ENCODE measurements at regions of chr3 and their contacts with region 1.

Region 1: DNA sequence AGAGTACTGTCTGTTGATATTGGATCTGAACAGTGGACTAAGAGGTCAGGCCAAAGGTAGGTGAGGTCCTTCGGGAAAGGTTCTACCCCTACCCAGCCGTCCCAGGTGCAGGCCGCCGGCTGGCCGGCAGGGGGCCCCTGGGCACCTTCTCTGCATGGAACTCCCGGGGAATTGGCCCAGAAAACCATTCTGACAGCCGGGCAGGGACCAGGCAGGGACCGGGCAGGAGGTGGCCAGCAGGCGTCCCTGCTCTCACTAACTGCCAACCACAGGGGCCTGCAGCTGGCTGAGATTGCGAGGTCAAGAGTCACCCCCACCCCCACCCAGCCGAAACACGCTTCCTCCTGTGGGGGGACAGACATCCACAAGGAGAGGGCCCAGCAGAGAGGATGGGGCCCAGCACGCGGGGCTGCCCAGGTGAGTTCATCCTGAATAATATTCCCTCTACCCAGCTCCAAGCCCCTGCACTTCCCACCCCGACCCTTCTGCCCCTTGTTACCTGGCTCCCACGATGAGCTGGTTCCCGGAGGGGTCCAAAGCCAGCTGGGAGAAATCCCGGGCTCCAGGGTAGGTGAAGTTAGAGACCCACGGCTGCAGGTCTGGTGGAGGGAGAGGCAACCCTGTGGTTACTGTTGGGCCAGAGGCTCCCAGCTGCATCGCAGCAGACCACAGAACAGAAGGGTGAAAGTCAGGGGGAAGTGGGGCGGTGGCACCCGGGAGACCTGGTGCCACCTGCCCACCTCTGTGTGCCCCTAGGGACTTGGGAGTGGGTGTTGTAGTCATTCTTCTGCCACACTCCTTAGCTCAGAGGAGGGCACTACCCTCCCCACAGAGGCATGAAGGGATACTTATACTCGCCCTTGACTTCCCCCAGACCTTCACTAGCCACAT is 84.4 kb downstream of the SEMA5B start:
- DNase-seq: peak; percentile 64 to 94
- ATAC-seq: peak; percentile 87 to 98
- H3K4me3 ChIP-seq: no peak overlapping the region
- H3K27ac ChIP-seq: no peak overlapping the region
- H3K4me1 ChIP-seq: peaks cover 6% of the 10 kb centered on the region; the same call in 2 of the 3 replicates
- CTCF ChIP-seq: peak; percentile 75
- EP300 ChIP-seq: no peak
- POLR2A ChIP-seq: no peak
- RAD21 ChIP-seq: peak; percentile 81 to 82

Region 2: GRCh38 chr3:122926322-122926721 is 16.9 kb before region 1 on chr3:
- CTCF ChIA-PET with region 1: interaction called, 10 read pairs
- POLR2A ChIA-PET with region 1: no interaction called
- DNase-seq: no peak
- ATAC-seq: no peak
- H3K4me3 ChIP-seq: no peak overlapping the region
- H3K27ac ChIP-seq: no peak overlapping the region
- H3K4me1 ChIP-seq: no peaks in the 10 kb centered on the region
- CTCF ChIP-seq: no peak
- EP300 ChIP-seq: no peak
- POLR2A ChIP-seq: no peak
- RAD21 ChIP-seq: no peak

Region 3: DNA sequence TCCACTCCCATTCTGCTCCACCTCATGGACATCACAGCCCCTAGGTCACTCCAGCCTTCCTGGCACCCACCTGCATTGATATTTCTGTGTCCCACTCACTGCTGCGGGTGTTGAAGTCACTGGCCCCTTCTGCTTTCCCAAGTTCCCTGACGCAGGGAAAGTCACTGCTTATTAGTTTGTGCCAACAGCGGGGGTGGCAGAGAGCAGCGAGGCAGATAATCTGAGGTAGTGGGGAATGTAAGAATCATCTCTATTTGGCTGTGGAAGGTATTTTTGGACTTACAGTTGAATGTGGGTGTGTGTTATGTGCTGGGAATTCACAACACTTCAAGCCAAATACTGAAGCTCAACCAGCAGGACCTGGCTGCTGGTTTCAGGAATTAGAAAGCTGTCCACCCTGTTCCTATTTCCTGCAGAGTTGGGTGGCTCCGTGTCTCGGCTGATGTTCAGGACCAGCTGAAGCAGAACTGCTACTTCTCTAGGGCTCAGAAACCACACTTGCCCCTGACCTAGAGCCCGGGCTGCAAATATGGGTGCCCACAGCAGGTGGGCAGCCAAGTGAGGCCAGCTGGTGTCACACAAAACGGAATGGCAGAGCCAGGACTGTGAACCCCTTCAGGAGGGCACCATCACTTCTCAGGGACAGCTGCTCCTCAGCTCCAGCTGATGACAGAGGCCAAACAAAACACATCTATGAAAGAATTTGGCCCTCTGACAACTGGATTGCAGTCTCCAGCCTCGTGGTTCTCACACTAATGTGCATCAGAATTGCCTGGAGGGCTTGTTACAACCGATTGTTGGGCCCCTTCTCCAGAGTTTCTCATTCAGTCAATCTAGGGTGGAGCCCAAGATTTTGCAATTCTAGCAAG is 26.6 kb after region 1 on chr3:
- CTCF ChIA-PET with region 1: interaction called, 11 read pairs
- POLR2A ChIA-PET with region 1: no interaction called
- DNase-seq: no peak
- ATAC-seq: no peak
- H3K4me3 ChIP-seq: no peak overlapping the region
- H3K27ac ChIP-seq: no peak overlapping the region
- H3K4me1 ChIP-seq: no peaks in the 10 kb centered on the region
- CTCF ChIP-seq: no peak
- EP300 ChIP-seq: no peak
- POLR2A ChIP-seq: no peak
- RAD21 ChIP-seq: no peak

Region 4: DNA sequence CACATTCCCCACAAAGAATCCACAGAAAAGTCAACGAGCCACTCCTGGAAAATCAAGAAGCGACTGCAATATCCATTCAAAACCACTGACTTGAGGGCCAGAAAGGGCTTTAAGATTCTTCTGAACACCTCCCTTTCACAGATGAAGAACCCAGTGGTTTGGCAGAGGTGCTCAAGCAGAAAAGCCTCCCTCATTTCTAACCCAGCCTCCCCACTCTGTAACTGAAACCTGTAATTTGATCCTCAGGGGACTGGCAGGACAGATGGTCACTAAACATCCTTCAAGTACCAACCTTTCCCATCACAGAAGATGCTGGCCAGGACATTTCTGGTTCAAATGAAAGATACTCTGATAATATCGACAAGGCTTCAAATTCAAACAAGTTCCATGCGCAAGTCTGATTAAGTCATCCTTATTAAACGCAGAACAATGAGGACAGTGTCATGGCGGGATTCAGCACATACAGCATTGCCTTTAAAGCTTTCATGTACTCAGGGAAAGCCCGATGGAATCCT is 78.9 kb after region 1 on chr3:
- CTCF ChIA-PET with region 1: interaction called, 95 read pairs
- POLR2A ChIA-PET with region 1: no interaction called
- DNase-seq: no peak
- ATAC-seq: no peak
- H3K4me3 ChIP-seq: no peak overlapping the region
- H3K27ac ChIP-seq: no peak overlapping the region
- H3K4me1 ChIP-seq: peaks cover 6% of the 10 kb centered on the region; the same call in 2 of the 3 replicates
- CTCF ChIP-seq: no peak
- EP300 ChIP-seq: no peak
- POLR2A ChIP-seq: no peak
- RAD21 ChIP-seq: no peak